T-cell (primary cell): ENCODE measurements at regions of chrX and their contacts with region 1.

Region 1: DNA sequence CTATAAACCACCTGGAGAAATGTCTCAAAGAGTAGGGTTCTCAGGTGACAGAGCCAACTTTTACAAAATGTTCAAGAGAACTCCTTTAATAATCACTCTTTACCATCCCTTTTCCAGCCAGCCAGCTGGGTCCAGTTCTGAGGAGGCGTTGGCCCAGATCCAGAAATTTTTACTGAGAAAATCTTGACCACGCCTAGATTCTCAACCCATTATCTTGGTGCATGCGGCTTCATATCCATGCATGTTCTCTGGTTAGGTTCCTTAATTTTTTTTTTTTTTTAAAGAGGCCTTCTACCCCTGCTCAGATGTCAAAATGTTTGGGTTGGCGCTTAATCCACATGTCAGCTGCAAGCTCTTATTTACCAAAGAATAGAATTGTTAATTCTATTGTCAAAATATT is 12.0 kb upstream of the MAP7D2 start:
- DNase-seq: no peak
- ATAC-seq: no peak
- H3K4me3 ChIP-seq: no peak overlapping the region
- H3K4me3 Mint-ChIP-seq: no peak overlapping the region
- H3K27ac ChIP-seq: no peak overlapping the region
- H3K27ac Mint-ChIP-seq: no peak overlapping the region
- H3K4me1 ChIP-seq: no peaks in the 10 kb centered on the region
- H3K4me1 Mint-ChIP-seq: peaks cover 0 to 2% (median 0%) of the 10 kb centered on the region in 3 donors
- H3K27me3 ChIP-seq: no peaks in the 10 kb centered on the region
- H3K27me3 Mint-ChIP-seq: no peaks in the 10 kb centered on the region

Region 2: DNA sequence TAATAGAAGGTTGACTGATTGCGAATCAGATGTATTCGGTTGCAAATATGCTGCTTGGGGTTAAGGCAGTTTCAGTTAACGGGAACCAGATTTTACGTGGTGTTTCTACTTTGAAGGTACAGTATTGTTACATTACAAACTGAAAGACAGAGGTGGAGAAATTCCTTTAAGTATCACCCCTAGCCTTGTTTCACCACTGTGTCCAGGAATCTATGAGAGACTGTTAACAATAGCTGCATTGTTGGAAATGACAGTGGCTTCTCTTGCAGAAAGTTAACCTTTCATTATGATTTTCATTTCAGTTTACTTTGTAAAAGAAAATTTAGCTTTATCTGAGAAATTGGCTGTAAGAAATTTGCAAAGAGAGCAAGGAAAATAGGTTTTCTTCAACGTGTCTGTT is 1700.7 kb before region 1 on chrX:
- CTCF ChIA-PET with region 1: no interaction called
- POLR2A ChIA-PET with region 1: interaction called in 1 of 2 experiments, 11 read pairs
- DNase-seq: no peak
- ATAC-seq: no peak
- H3K4me3 ChIP-seq: no peak overlapping the region
- H3K4me3 Mint-ChIP-seq: no peak overlapping the region
- H3K27ac ChIP-seq: no peak overlapping the region
- H3K27ac Mint-ChIP-seq: no peak overlapping the region
- H3K4me1 ChIP-seq: peaks cover 3 to 4% of the 10 kb centered on the region in 2 experiments
- H3K4me1 Mint-ChIP-seq: peaks cover 6 to 12% (median 11%) of the 10 kb centered on the region in 3 donors
- H3K27me3 ChIP-seq: no peaks in the 10 kb centered on the region
- H3K27me3 Mint-ChIP-seq: peaks cover 0 to 12% of the 10 kb centered on the region in 2 donors

Region 3: DNA sequence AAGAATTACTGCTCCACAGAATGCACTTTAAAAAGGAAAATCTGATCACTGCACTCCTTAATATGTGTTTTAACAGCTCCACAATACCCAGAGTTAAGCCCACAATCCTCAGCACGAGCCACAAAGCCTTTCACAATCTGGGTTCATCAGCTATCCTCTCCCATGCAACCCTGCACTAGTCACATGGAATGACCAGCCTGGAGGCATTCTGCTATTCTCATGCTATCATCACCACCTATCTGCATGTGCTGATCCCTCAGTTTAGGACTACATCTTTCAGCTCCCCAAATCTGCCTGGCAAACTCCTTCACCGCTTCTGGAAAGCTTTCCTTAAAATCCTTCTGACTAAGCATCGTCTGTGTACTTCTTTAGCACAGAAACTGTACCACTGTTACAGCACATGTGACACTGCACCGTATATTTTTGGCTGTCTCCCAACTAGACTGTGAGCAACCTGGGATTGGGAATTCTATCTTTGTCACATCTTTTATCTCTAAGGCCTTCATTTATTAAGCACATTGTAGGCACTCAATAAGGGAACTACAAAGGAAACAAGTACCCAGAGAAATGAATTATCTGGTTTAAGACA is 31.2 kb after region 1 on chrX:
- CTCF ChIA-PET with region 1: no interaction called
- POLR2A ChIA-PET with region 1: no interaction called
- DNase-seq: no peak
- ATAC-seq: no peak
- H3K4me3 ChIP-seq: no peak overlapping the region
- H3K4me3 Mint-ChIP-seq: no peak overlapping the region
- H3K27ac ChIP-seq: no peak overlapping the region
- H3K27ac Mint-ChIP-seq: no peak overlapping the region
- H3K4me1 ChIP-seq: no peaks in the 10 kb centered on the region
- H3K4me1 Mint-ChIP-seq: peaks cover 0 to 2% (median 0%) of the 10 kb centered on the region in 3 donors
- H3K27me3 ChIP-seq: no peaks in the 10 kb centered on the region
- H3K27me3 Mint-ChIP-seq: peaks cover 0 to 8% of the 10 kb centered on the region in 2 donors